ENCODE measurements at regions of chr16 and their contacts with region 1.

Region 1: GRCh38 chr16:67428146-67428731 is 2.7 kb upstream of the HSD11B2 start:
- DNase-seq: peak; percentile 49 to 73 (median 70)
- H3K4me3 ChIP-seq: no peak overlapping the region
- H3K27ac ChIP-seq: no peak overlapping the region
- H3K4me1 ChIP-seq: peaks cover 0 to 16% (median 14%) of the 10 kb centered on the region in 4 experiments
- H3K27me3 ChIP-seq: peaks cover 2 to 67% (median 30%) of the 10 kb centered on the region in 5 experiments

Region 2: DNA sequence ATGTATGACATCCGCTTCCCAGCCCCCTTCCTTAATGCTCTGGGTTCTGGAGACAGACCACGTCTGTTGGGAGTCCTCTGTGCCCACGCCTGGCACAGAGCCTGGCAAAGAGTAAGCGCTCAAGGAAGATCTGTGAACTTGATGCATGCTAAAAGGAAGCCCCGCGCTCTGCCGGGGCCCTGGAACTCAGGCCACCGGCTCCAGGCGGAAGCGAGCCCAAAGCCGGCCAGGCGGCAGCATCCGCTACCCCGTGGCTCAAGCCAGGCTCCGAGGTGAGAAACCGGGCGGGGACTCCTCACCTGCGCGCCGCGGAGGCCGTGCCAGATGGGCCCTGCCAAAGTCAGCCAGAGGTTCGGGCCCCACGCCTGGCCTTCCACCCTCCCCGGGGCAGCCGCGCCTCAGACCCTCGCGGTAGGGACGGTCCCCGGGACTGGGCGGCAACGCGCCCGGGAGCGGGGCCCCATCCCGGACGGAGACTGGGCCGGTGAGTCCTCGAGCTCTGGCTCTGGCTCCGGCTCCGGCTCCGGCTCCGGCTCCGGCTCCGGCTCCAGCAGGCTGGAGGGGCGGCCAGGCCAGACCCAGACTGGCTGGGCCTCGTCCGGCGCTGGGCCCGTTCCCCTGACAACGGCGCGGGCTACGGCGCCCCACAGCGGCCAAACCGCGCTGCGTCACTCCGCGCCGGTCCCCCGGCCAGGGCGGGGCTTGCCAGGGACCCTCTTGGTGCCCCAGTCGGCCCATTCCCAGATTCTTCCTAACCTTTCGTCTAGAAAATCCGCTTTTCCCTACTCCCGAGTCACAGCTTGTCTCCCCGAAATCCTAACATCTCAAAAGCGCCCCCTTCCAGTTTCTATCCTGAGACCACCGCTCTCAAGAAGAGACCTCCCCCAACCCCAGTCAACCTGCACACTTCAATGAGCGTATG is 12.1 kb before region 1 on chr16 and contains the start of gene ZDHHC1:
- CTCF ChIA-PET with region 1: interaction called, 49 read pairs
- POLR2A ChIA-PET with region 1: interaction called, 3 read pairs
- DNase-seq: peak; percentile 49 to 66 (median 63)
- H3K4me3 ChIP-seq: peak within 1 kb of the TSS; percentile 55 to 79 (median 70)
- H3K27ac ChIP-seq: peak within 1 kb of the TSS; percentile 15 to 66
- H3K4me1 ChIP-seq: peaks cover 0 to 14% (median 12%) of the 10 kb centered on the region in 4 experiments
- H3K27me3 ChIP-seq: peaks cover 0 to 1% (median 0%) of the 10 kb centered on the region in 5 experiments

Region 3: DNA sequence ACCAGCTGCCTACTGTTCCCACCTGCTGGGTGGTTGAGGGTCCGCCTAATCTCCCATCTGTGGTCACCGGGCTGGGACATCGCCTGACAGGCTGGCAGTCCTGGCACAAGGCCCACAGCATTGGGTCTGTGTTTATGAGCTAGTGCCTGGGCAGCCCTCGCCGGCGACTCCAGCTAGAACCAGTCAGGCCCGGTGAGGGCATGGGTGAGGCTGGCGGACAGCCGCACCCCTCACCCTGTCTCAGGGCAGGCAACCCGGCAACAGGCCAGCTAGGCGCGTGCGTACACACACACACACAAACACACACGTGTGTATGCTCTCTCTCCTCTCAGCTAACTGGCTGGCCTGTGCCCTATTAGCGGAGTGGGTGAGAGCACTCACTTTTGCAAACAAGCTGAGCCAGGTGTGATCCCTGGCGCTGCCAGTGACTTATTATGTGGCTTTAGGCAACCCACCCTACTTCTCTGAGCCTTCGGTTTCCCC is 13.1 kb after region 1 on chr16:
- CTCF ChIA-PET with region 1: interaction called, 34 read pairs
- POLR2A ChIA-PET with region 1: no interaction called
- DNase-seq: peak; percentile 17 to 73 (median 53)
- H3K4me3 ChIP-seq: no peak overlapping the region
- H3K27ac ChIP-seq: no peak overlapping the region
- H3K4me1 ChIP-seq: peaks cover 0 to 16% (median 0%) of the 10 kb centered on the region in 4 experiments
- H3K27me3 ChIP-seq: no peaks in the 10 kb centered on the region

Region 4: GRCh38 chr16:67447508-67448076 is 19.4 kb after region 1 on chr16:
- CTCF ChIA-PET with region 1: interaction called, 34 read pairs
- POLR2A ChIA-PET with region 1: interaction called, 3 read pairs
- DNase-seq: peak in 2 of 3 donors; percentile 21 to 38
- H3K4me3 ChIP-seq: no peak overlapping the region
- H3K27ac ChIP-seq: no peak overlapping the region
- H3K4me1 ChIP-seq: no peaks in the 10 kb centered on the region
- H3K27me3 ChIP-seq: no peaks in the 10 kb centered on the region

Region 5: GRCh38 chr16:67456391-67457081 is 28.3 kb after region 1 on chr16:
- CTCF ChIA-PET with region 1: interaction called, 149 read pairs
- POLR2A ChIA-PET with region 1: interaction called, 3 read pairs
- DNase-seq: peak; percentile 26 to 61 (median 58)
- H3K4me3 ChIP-seq: no peak overlapping the region
- H3K27ac ChIP-seq: no peak overlapping the region
- H3K4me1 ChIP-seq: peaks cover 0 to 11% (median 3%) of the 10 kb centered on the region in 4 experiments
- H3K27me3 ChIP-seq: no peaks in the 10 kb centered on the region